ENCODE measurements at regions of chr22 and their contacts with region 1.

Region 1: DNA sequence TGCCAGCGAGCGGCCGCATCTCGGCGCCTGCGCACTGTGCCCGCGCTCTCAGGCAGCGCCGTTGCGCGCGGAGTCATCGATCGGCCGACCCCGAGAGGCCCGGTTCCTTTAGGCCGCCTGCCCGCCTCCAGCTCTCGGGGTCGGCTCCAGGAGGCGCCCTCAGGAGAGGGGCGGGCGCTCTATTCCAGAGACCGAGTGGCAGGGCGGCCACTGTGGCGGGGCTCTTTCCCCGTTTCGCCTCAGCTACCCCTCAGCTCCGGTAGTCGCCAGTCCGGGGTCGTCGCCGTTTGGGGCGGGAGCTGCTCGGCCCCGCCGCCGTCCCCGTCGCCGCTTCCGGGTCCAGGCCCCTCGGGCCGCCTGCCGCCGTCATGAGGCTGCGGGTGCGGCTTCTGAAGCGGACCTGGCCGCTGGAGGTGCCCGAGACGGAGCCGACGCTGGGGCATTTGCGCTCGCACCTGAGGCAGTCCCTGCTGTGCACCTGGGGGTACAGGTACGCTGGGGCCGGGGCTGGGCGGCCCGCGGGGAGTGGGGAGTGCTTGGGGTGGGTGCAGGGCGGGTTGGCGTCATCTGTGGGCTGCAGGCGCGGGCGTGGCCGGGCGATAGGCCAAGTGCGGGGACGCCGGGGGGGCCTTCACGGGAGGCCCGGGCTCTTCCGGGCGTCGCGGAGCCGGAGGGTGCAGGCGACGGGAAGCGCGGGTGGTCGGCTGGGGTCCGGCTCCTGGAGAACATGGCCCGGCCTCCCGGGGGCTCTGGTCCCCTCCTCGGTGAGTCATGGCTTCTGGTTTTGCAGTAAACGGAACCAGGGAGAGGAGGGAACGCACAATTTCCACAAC is at the start of gene FBXO7:
- DNase-seq: peak; percentile 96
- H3K4me3 Mint-ChIP-seq: peak within 1 kb of the TSS; percentile 89
- H3K27ac Mint-ChIP-seq: peak within 1 kb of the TSS; percentile 95
- H3K4me1 Mint-ChIP-seq: peaks cover 20% of the 10 kb centered on the region
- H3K27me3 Mint-ChIP-seq: no peaks in the 10 kb centered on the region
- total RNA-seq, gene FBXO7: 95.6 and 96.5 TPM in 2 replicates

Region 2: DNA sequence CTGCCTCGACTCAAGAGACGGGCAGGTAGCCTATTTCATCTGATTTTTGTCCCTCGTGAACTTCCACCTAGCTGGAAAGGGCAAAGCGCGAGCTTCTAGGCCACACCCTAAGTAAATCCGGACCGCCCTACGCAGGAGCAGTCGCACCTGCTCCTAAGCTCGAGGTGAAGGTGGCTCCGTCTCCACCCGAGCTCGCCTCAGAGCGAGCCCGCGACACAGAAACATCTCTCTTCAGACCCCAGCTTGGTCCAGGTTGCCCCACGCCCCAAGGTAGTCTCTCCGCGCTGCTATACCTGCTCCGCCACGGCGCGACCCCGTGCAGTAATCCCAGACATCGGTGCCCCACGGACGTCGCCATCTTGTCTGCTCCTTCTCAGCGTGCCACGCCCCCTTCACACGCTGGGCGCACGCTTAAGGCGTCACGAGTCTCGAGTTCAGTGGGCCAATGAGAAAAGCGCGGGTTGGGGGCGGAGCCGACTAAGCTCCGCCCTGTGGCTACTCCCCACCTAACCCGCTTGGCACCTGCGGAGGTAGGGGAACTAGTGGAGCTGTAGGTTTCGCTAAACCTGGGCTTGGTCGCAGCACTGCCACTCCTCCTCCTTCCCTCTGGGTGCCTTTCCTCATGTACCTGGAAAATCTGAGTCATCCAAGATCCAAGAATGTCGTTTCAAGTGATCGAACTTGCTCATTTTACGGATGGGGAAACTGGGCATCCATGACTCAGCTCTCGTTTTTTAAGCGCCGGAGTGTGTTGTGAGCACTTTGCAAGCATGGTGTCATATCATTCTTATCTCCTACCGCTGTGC is 812.8 kb before region 1 on chr22 and contains the start of gene PISD:
- intact Hi-C with region 1: loop called (anchors 2 kb)
- DNase-seq: peak; percentile 99
- H3K4me3 Mint-ChIP-seq: peak within 1 kb of the TSS; percentile 98
- H3K27ac Mint-ChIP-seq: peak within 1 kb of the TSS; percentile 100
- H3K4me1 Mint-ChIP-seq: peaks cover 27% of the 10 kb centered on the region
- H3K27me3 Mint-ChIP-seq: peaks cover 4% of the 10 kb centered on the region
- total RNA-seq, gene PISD: 44.9 and 52.1 TPM in 2 replicates

Region 3: DNA sequence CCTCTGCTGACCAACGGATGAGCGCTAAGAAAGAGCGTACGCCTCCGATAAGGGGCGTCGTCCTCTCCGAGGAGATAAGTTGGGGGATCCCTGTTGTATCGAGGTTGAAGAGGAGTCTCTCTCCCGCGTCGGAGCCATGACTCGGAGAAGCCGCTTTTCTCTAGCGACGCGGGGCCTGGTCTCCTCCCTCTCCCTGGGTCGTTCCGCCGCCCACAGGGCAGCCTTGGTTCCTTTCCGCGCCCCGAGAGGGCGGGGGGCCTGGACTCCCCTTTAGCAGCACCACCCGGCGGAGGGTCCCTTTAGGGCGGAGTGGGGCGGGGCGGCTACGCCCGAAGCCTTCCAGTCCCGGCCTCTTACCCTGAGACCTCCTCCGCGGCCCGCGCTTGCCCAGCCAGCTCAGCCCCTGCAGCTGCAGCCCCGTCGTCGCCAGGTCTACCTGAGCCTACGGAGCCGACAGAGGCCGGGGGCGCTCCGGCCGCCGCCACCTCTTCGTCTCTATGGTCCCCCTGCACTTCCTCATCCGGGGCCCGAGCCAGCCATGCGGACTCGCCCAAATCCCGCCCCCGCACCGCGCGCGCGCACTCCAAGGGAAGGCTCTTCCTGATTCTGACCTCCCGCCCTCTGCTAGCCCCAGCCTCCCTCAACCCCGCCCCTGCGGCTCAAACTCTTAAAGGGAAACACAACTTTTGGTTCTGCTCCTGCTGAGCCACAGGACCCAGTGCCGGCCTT is 725.1 kb before region 1 on chr22 and contains the start of gene PRR14L:
- intact Hi-C with region 1: loop called (anchors 5 kb)
- DNase-seq: peak; percentile 100
- H3K4me3 Mint-ChIP-seq: peak within 1 kb of the TSS; percentile 99
- H3K27ac Mint-ChIP-seq: peak within 1 kb of the TSS; percentile 96
- H3K4me1 Mint-ChIP-seq: peaks cover 48% of the 10 kb centered on the region
- H3K27me3 Mint-ChIP-seq: peaks cover 2% of the 10 kb centered on the region
- total RNA-seq, gene PRR14L: 61.0 and 63.6 TPM in 2 replicates

Region 4: DNA sequence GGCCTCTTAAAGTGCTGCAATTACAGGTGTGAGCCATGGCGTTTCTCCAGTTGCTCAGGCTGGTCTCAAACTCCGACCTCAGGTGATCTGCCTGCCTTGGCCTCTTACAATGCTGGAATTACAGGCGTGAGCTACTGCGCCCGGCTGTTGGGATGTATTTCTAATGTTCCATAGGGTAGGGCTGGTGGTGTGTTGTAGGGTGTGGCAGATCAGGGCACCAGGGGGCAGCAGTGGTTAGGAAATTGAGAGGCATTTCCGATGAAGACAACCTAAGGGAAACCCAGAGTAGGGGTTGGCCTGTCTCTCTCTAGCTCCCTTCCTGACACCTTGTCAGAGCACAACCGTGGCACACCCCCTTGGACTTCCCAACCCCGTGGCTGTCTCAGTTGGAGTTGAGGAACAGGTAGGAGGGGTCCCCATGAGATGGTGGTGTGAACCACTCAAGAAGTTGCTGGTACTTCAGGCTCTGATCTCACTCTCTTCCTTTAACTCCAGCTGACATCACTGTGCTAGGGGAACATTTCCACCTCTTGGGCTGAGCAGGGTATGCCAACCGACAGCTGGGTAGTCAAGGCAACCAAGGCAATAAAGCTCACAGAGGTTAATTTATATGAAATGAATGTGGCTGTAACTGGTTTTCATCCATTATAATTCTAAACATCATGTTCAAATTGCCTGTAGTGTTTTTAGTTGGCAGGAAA is 497.6 kb before region 1 on chr22:
- intact Hi-C with region 1: loop called (anchors 1 kb)
- DNase-seq: peak; percentile 93
- H3K4me3 Mint-ChIP-seq: no peak overlapping the region
- H3K27ac Mint-ChIP-seq: no peak overlapping the region
- H3K4me1 Mint-ChIP-seq: peaks cover 5% of the 10 kb centered on the region
- H3K27me3 Mint-ChIP-seq: peaks cover 16% of the 10 kb centered on the region

Region 5: DNA sequence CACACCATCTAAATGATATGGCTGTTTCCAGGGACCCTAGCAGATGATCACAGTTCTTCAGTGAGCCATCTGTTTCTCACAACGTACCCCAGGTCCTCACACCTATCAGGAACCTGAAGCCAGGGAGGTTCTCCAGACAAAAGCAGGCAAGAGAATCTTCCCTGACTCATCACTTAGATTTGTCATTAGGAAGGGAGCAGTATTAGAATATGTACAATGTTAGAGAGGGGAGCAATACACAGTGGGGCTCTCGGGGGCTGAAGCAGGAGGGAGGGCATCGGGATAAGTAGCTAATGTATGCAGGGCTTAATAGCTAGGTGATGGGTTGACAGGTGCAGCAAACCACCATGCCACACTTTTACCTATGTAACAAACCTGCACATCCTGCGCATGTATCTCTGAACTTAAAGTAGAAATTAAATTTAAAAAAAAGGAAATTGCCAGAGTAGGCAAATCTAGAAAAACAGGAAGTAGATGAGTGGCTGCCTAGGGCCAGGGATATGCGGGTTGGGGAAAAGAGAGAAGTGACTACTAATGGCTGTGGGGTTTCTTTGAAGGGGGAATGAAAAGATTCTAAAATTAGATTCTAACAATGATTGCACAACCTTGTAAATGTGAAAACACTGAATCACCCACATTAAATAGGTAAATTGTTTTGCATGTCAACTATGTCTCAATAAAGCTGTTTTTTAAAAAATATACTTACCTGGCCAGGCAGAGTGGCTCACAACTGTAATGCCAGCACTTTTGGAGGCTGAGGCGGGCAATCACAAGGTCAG is 330.2 kb before region 1 on chr22:
- intact Hi-C with region 1: loop called (anchors 5 kb)
- DNase-seq: no peak
- H3K4me3 Mint-ChIP-seq: no peak overlapping the region
- H3K27ac Mint-ChIP-seq: peak overlapping the region; percentile 80
- H3K4me1 Mint-ChIP-seq: peaks cover 43% of the 10 kb centered on the region
- H3K27me3 Mint-ChIP-seq: peaks cover 3% of the 10 kb centered on the region

Region 6: GRCh38 chr22:32202539-32203180 is 272.2 kb before region 1 on chr22:
- intact Hi-C with region 1: loop called (anchors 5 kb)
- DNase-seq: peak; percentile 77
- H3K4me3 Mint-ChIP-seq: peak overlapping the region; percentile 68
- H3K27ac Mint-ChIP-seq: no peak overlapping the region
- H3K4me1 Mint-ChIP-seq: peaks cover 24% of the 10 kb centered on the region
- H3K27me3 Mint-ChIP-seq: peaks cover 19% of the 10 kb centered on the region

Region 7: GRCh38 chr22:32411829-32412592 is 62.8 kb before region 1 on chr22 and contains the start of gene RTCB:
- intact Hi-C with region 1: loop called (anchors 1 kb)
- DNase-seq: peak; percentile 98
- H3K4me3 Mint-ChIP-seq: peak within 1 kb of the TSS; percentile 97
- H3K27ac Mint-ChIP-seq: peak within 1 kb of the TSS; percentile 96
- H3K4me1 Mint-ChIP-seq: peaks cover 40% of the 10 kb centered on the region
- H3K27me3 Mint-ChIP-seq: peaks cover 9% of the 10 kb centered on the region
- total RNA-seq, gene RTCB: 104 and 105 TPM in 2 replicates

Measured in activated CD4-positive, alpha-beta T cell treated with anti-CD3 and anti-CD28 coated beads, Interleukin-2, amount 10 ng/mL, durations not matched to agents 24 days and 14 days (primary cell).